ENCODE measurements at regions of chr20 and their contacts with region 1.

Region 1: DNA sequence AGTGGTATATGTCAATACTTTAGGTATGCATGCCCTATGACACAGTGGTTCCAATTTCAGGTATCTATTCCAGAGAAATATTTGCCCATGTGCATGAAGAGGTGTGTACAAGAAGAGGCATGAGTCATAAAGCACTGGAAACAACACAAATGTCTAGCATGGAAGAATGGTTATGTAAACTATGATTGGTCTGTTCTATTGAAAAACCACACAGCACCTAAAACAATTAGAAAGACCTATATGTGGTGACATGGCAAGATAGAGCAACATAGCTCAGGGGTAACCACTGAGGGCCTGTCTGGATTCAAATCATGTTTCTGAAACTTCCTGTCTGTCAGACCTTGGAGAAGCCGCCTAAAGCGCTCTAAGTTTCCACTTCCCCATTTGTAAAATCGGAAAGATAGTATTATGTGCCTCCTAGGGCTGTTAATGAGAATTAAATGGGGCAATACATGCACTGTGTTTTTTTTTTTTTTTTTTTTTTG is 76.0 kb upstream of the SHLD1 start:
- DNase-seq: peak; percentile 84
- ATAC-seq: peak; percentile 93
- H3K4me3 ChIP-seq: peak overlapping the region in 1 of 5 experiments; percentile 6
- H3K4me3 Mint-ChIP-seq: peak overlapping the region; percentile 44
- H3K27ac ChIP-seq: peak overlapping the region in 1 of 2 donors; percentile 78
- H3K27ac Mint-ChIP-seq: peak overlapping the region; percentile 42
- H3K4me1 ChIP-seq: peaks cover 28 to 33% of the 10 kb centered on the region in 2 donors
- H3K4me1 Mint-ChIP-seq: peaks cover 26% of the 10 kb centered on the region
- H3K27me3 ChIP-seq: no peaks in the 10 kb centered on the region
- H3K27me3 Mint-ChIP-seq: no peaks in the 10 kb centered on the region
- CTCF ChIP-seq: peak; percentile 25

Region 2: DNA sequence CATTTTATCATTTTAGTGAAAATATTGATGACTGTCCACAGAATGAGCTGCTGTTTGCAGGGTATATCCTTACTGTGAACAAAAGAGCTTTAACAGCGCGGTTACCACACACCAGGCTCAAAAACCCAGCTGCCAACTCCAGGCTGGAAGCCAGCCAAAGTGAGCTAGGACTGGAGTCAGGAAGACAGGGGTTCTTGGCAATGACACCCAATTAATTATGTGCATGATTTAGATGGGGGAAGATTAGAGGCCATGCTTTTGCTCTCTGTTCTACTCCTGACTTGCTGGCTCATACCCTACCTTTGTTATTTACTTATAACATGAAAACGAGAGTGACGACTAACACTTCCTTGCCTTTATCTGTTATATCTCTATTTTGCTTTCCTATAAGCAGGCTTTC is 52.9 kb before region 1 on chr20:
- CTCF ChIA-PET with region 1: no interaction called
- POLR2A ChIA-PET with region 1: interaction called, 11 read pairs
- intact Hi-C with region 1: no loop called
- DNase-seq: no peak
- ATAC-seq: no peak
- H3K4me3 ChIP-seq: no peak overlapping the region
- H3K4me3 Mint-ChIP-seq: no peak overlapping the region
- H3K27ac ChIP-seq: no peak overlapping the region
- H3K27ac Mint-ChIP-seq: no peak overlapping the region
- H3K4me1 ChIP-seq: peaks cover 0 to 3% of the 10 kb centered on the region in 2 donors
- H3K4me1 Mint-ChIP-seq: peaks cover 3% of the 10 kb centered on the region
- H3K27me3 ChIP-seq: no peaks in the 10 kb centered on the region
- H3K27me3 Mint-ChIP-seq: no peaks in the 10 kb centered on the region
- CTCF ChIP-seq: no peak

Region 3: GRCh38 chr20:5642155-5642981 is 31.9 kb before region 1 on chr20:
- CTCF ChIA-PET with region 1: interaction called, 3 read pairs
- POLR2A ChIA-PET with region 1: no interaction called
- intact Hi-C with region 1: loop called (anchors 1 kb)
- DNase-seq: no peak
- ATAC-seq: no peak
- H3K4me3 ChIP-seq: peak overlapping the region in 1 of 5 experiments; percentile 36
- H3K4me3 Mint-ChIP-seq: peak overlapping the region; percentile 12
- H3K27ac ChIP-seq: peak overlapping the region; percentile 1 to 42
- H3K27ac Mint-ChIP-seq: peak overlapping the region; percentile 69
- H3K4me1 ChIP-seq: peaks cover 56% of the 10 kb centered on the region in 2 donors
- H3K4me1 Mint-ChIP-seq: peaks cover 46% of the 10 kb centered on the region
- H3K27me3 ChIP-seq: no peaks in the 10 kb centered on the region
- H3K27me3 Mint-ChIP-seq: no peaks in the 10 kb centered on the region
- CTCF ChIP-seq: no peak

Region 4: DNA sequence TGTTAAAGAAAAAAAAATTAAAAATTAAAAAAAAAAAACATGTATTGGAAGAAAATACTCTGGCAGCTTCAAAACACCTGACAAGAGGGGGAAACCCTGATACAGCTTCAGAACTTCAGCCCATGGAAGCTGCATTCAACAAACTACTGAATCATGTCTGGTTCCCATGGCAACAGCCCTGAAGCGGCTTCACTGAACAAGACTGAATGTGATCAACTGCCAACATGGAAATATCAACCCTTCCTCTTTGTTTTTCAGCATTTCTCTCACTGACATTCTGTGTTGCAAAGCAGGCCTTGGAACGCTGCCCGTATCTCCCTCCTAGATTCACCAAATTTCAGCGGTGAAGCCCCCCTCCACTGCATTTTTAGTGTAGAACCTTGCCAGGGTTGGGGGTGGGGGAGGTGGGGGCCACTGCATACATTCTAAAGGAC is 15.3 kb before region 1 on chr20:
- CTCF ChIA-PET with region 1: interaction called, 4 read pairs
- POLR2A ChIA-PET with region 1: interaction called, 3 read pairs
- intact Hi-C with region 1: loop called (anchors 2 kb)
- DNase-seq: peak; percentile 94
- ATAC-seq: peak; percentile 78
- H3K4me3 ChIP-seq: no peak overlapping the region
- H3K4me3 Mint-ChIP-seq: peak overlapping the region; percentile 71
- H3K27ac ChIP-seq: peak overlapping the region; percentile 61 to 75
- H3K27ac Mint-ChIP-seq: peak overlapping the region; percentile 91
- H3K4me1 ChIP-seq: peaks cover 44 to 60% of the 10 kb centered on the region in 2 donors
- H3K4me1 Mint-ChIP-seq: peaks cover 58% of the 10 kb centered on the region
- H3K27me3 ChIP-seq: no peaks in the 10 kb centered on the region
- H3K27me3 Mint-ChIP-seq: no peaks in the 10 kb centered on the region
- CTCF ChIP-seq: no peak

Region 5: GRCh38 chr20:5691918-5692618 is 17.9 kb after region 1 on chr20:
- CTCF ChIA-PET with region 1: no interaction called
- POLR2A ChIA-PET with region 1: interaction called, 8 read pairs
- intact Hi-C with region 1: loop called (anchors 2 kb)
- DNase-seq: peak; percentile 83
- ATAC-seq: peak; percentile 100
- H3K4me3 ChIP-seq: peak overlapping the region in 1 of 5 experiments; percentile 14
- H3K4me3 Mint-ChIP-seq: peak overlapping the region; percentile 69
- H3K27ac ChIP-seq: peak overlapping the region in 1 of 2 donors; percentile 25
- H3K27ac Mint-ChIP-seq: peak overlapping the region; percentile 86
- H3K4me1 ChIP-seq: peaks cover 30 to 40% of the 10 kb centered on the region in 2 donors
- H3K4me1 Mint-ChIP-seq: peaks cover 18% of the 10 kb centered on the region
- H3K27me3 ChIP-seq: no peaks in the 10 kb centered on the region
- H3K27me3 Mint-ChIP-seq: no peaks in the 10 kb centered on the region
- CTCF ChIP-seq: no peak

Region 6: GRCh38 chr20:5749952-5750779 is 75.9 kb after region 1 on chr20 and contains the start of gene SHLD1:
- CTCF ChIA-PET with region 1: no interaction called
- POLR2A ChIA-PET with region 1: interaction called, 4 read pairs
- intact Hi-C with region 1: loop called (anchors 5 kb)
- DNase-seq: peak; percentile 87
- ATAC-seq: peak; percentile 95
- H3K4me3 ChIP-seq: peak within 1 kb of the TSS; percentile 72 to 98 (median 84)
- H3K4me3 Mint-ChIP-seq: peak within 1 kb of the TSS; percentile 93
- H3K27ac ChIP-seq: peak within 1 kb of the TSS; percentile 8 to 67
- H3K27ac Mint-ChIP-seq: peak within 1 kb of the TSS; percentile 96
- H3K4me1 ChIP-seq: peaks cover 5 to 13% of the 10 kb centered on the region in 2 donors
- H3K4me1 Mint-ChIP-seq: peaks cover 24% of the 10 kb centered on the region
- H3K27me3 ChIP-seq: no peaks in the 10 kb centered on the region
- H3K27me3 Mint-ChIP-seq: peaks cover 4% of the 10 kb centered on the region
- CTCF ChIP-seq: no peak
- total RNA-seq, gene SHLD1: 15.4 and 15.5 TPM in 2 replicates

Measured in B cell (primary cell).